WTC11 (cell line): ENCODE measurements at regions of chr16 and their contacts with region 1.

Region 1: DNA sequence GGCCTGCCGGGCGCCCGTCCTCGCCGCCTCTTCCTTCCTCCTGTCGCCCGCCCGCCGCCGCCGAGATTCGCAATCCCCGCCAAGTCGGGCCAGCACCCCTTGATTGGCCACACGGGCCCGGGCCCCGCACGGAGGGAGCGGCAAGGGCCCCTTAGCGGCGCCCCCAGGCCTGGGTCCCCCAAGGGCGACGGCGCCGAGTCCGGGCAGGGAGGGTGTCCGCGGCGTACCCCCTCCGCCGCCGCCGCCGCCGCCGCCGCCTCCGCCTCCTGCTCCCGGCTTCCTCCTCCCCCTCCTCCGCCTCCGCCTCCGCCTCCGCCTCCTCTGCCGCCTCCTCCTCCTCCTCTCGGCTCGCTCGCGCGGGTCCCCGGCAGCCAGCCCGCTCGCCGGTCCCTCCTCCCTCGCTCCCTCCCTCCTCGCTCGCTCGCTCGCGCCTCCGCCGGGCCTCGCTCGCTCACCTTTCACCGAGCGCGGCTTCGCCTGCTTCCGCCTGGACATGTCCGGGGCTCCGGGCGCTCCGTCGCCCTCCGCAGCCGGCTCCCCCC is 561 bp downstream of the ZNF423 start:
- DNase-seq: peak; percentile 88
- ATAC-seq: peak; percentile 35
- H3K4me3 Mint-ChIP-seq: peak overlapping the region; percentile 56
- H3K27ac Mint-ChIP-seq: no peak overlapping the region
- H3K4me1 Mint-ChIP-seq: peaks cover 46% of the 10 kb centered on the region
- H3K27me3 Mint-ChIP-seq: peaks cover 18% of the 10 kb centered on the region
- CTCF ChIP-seq: no peak

Region 2: GRCh38 chr16:49556606-49557446 is 298.5 kb before region 1 on chr16:
- CTCF ChIA-PET with region 1: interaction called, 13 read pairs
- POLR2A ChIA-PET with region 1: no interaction called
- DNase-seq: peak; percentile 68
- ATAC-seq: peak; percentile 91
- H3K4me3 Mint-ChIP-seq: no peak overlapping the region; the same call in 1 of the 2 replicates
- H3K27ac Mint-ChIP-seq: peak overlapping the region; percentile 87
- H3K4me1 Mint-ChIP-seq: no peaks in the 10 kb centered on the region
- H3K27me3 Mint-ChIP-seq: no peaks in the 10 kb centered on the region
- CTCF ChIP-seq: peak; percentile 53

Region 3: DNA sequence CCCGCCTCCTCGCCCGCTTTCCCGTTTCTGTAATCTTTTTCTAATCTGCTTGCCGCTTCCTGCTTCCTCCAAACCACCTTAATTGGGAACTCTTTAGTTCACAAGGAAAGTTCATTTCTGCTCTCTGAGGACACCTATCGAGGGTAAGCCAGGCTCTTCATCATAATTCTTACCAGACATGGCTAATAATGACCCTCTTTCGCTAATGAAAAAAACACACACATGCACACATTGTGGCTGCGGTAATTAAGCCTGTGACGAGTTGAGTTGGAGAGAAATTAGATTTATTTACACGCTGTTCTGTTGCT is 100.1 kb before region 1 on chr16:
- CTCF ChIA-PET with region 1: interaction called, 15 read pairs
- POLR2A ChIA-PET with region 1: no interaction called
- DNase-seq: no peak
- ATAC-seq: peak; percentile 18
- H3K4me3 Mint-ChIP-seq: peak overlapping the region; percentile 64
- H3K27ac Mint-ChIP-seq: peak overlapping the region; percentile 86
- H3K4me1 Mint-ChIP-seq: peaks cover 78% of the 10 kb centered on the region
- H3K27me3 Mint-ChIP-seq: no peaks in the 10 kb centered on the region
- CTCF ChIP-seq: no peak

Region 4: DNA sequence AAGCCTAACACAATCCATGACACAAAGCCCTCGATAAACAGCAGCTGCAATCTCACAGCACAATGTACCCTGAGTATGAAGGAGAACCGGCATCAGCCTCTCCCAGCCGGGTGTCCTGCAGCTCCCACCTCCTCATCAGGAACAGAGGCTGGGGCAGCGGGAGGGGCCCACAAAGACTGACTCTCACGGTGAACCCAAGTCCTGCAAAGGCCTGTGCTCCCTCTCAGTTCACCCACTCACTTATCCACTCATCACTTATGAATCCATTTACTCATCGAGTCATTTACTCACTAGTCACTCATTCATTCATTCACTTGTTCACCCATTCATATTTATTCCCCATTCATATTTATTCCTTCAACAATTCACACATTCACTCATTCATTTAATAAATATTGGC is 11.0 kb before region 1 on chr16:
- CTCF ChIA-PET with region 1: interaction called, 11 read pairs
- POLR2A ChIA-PET with region 1: interaction called, 3 read pairs
- DNase-seq: no peak
- ATAC-seq: peak; percentile 25; the same call in 1 of the 2 replicates
- H3K4me3 Mint-ChIP-seq: no peak overlapping the region
- H3K27ac Mint-ChIP-seq: peak overlapping the region; percentile 59
- H3K4me1 Mint-ChIP-seq: peaks cover 83% of the 10 kb centered on the region
- H3K27me3 Mint-ChIP-seq: no peaks in the 10 kb centered on the region
- CTCF ChIP-seq: no peak

Region 5: GRCh38 chr16:49890876-49891275 is 35.5 kb after region 1 on chr16:
- CTCF ChIA-PET with region 1: interaction called, 58 read pairs
- POLR2A ChIA-PET with region 1: interaction called, 3 read pairs
- DNase-seq: peak; percentile 77
- ATAC-seq: peak; percentile 98
- H3K4me3 Mint-ChIP-seq: no peak overlapping the region
- H3K27ac Mint-ChIP-seq: no peak overlapping the region
- H3K4me1 Mint-ChIP-seq: no peaks in the 10 kb centered on the region; the same call in 1 of the 2 replicates
- H3K27me3 Mint-ChIP-seq: no peaks in the 10 kb centered on the region
- CTCF ChIP-seq: peak; percentile 44; the same call in 1 of the 2 replicates

Region 6: DNA sequence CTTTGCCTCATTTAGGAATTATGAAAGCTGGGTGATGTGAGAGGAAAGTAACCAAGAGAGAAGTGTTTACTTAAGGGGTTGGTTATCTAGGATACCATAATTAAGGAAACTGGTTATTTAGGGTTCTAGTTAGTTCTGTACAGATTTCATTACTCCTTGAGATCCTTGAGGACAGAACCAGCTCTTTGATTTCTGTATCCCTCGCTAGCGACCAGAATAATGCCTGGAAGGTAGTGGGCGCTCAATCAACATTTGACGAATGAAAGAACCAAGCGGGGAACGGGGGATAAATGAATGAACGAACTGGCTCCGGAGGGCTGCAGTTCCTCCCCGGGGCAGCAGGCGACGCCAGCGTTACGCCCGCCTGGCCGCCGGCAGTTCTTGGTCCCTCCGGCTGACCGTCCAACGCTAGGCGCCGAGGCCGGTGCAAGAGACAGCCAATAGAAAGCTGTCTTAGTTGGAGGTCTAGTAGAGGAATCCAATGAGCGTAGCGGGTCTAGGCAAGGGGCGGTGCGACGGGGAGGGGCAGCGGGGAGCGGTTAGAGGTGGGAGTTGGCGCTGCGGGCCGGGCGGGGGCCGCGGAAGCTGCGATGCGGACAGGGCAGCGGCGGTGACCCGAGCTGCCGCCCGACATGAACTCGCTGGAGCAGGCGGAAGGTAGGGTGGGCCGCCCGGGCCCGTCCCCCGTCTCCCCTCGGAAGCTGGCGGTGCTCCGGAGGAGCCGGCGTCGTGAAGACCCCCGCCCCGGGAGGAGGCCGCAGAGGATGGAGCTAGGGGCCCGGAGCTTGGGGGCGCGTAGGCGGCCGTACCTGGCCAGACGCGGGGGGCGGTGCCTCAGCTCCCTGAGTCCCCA is 169.6 kb after region 1 on chr16 and contains the start of gene CNEP1R1:
- CTCF ChIA-PET with region 1: interaction called, 16 read pairs
- POLR2A ChIA-PET with region 1: no interaction called
- DNase-seq: peak; percentile 95
- ATAC-seq: peak; percentile 95
- H3K4me3 Mint-ChIP-seq: peak within 1 kb of the TSS; percentile 92
- H3K27ac Mint-ChIP-seq: peak within 1 kb of the TSS; percentile 46
- H3K4me1 Mint-ChIP-seq: peaks cover 16% of the 10 kb centered on the region
- H3K27me3 Mint-ChIP-seq: no peaks in the 10 kb centered on the region
- CTCF ChIP-seq: peak; percentile 92
- total RNA-seq, gene CNEP1R1: 13.2 to 13.8 TPM (median 13.7 TPM) in 3 replicates

Region 7: DNA sequence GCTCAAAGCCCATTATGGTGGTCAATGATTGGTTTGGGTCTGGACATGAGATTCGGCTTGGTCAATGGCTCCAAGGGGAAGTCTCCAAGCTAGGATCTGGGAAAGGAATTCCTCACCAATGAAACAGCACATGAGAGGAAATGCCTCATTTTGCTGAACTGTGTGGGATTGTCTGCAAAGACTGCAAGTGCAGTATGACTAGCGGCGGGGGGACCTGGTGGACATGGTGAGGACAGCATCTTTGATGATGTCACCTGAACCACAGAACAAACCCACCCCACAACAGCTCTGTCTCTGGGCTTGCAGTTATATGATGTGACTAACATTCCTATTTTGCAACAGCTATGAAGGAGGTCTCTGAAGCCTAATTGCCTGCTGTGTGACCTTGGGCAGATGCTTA is 642.2 kb after region 1 on chr16:
- CTCF ChIA-PET with region 1: no interaction called
- POLR2A ChIA-PET with region 1: no interaction called
- DNase-seq: no peak
- ATAC-seq: no peak
- H3K4me3 Mint-ChIP-seq: no peak overlapping the region
- H3K27ac Mint-ChIP-seq: no peak overlapping the region
- H3K4me1 Mint-ChIP-seq: peaks cover 18% of the 10 kb centered on the region
- H3K27me3 Mint-ChIP-seq: no peaks in the 10 kb centered on the region; the same call in 1 of the 2 replicates
- CTCF ChIP-seq: no peak